MCF 10A (cell line): ENCODE measurements at regions of chr20 and their contacts with region 1.

Region 1: DNA sequence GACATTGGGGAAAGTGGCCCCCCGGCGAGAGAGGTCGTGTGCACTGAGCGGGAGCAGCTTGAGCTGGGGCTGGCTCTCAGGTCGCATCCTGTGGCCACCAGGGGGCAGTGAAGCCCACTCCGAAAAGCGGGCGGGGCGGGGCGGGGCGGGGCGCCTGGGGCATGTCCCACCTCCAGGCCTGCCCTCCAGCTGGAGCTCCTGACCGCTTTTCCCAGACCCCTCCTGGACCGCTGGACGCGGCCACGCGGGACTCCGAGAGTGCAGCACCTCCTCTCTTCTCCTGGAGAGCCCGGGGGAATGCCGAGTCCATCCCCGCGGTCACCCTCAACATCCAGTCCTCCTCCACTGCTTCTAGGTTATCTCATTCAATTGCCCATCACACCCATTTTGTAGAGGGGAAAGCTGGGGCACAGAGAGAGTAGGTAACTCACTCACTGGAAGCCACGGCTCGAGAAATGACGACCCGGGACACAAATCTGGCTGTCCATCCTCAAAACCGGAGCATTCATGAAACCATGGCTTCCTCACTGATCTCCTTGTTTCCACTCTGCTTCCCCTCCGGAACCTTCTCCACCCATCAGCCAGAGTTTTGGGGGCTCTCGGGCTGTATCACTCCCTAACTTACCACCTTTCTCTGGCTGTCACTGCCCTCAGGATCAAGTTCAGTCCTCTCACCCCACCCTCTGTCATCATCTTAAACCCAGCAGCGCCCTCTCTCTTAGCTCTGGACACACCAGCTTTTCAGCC is 24.1 kb downstream of the COX4I2 start:
- DNase-seq: peak; percentile 71
- H3K4me3 Mint-ChIP-seq: peak overlapping the region; percentile 58
- H3K27ac Mint-ChIP-seq: no peak overlapping the region
- H3K4me1 Mint-ChIP-seq: peaks cover 19% of the 10 kb centered on the region
- H3K27me3 Mint-ChIP-seq: no peaks in the 10 kb centered on the region
- CTCF ChIP-seq: peak; percentile 75

Region 2: DNA sequence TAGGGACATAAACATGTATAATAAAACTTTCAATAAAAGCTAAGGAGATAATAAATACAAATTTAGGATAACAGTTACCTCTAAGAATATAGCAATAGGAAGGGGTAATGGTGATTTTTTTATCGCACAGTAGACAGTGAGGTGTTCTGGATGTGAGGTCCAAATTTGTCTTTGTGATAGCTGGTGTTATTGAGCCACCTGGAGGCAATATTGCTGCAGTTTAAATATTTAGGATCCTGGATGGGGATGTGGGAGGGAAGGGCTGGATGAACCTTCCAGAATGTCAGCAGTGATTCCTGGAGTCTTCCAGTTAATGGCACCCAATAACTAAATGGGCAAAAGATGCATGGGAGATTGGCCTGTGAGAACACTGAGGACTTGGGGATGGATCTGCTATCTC is 207.4 kb before region 1 on chr20:
- CTCF ChIA-PET with region 1: no interaction called
- POLR2A ChIA-PET with region 1: no interaction called
- intact Hi-C with region 1: no loop called
- DNase-seq: no peak
- H3K4me3 Mint-ChIP-seq: no peak overlapping the region
- H3K27ac Mint-ChIP-seq: no peak overlapping the region
- H3K4me1 Mint-ChIP-seq: no peaks in the 10 kb centered on the region
- H3K27me3 Mint-ChIP-seq: peaks cover 12% of the 10 kb centered on the region
- CTCF ChIP-seq: no peak

Region 3: GRCh38 chr20:31630187-31630790 is 31.5 kb before region 1 on chr20:
- CTCF ChIA-PET with region 1: interaction called, 73 read pairs
- POLR2A ChIA-PET with region 1: interaction called, 5 read pairs
- intact Hi-C with region 1: no loop called
- DNase-seq: peak; percentile 63
- H3K4me3 Mint-ChIP-seq: no peak overlapping the region
- H3K27ac Mint-ChIP-seq: no peak overlapping the region
- H3K4me1 Mint-ChIP-seq: no peaks in the 10 kb centered on the region
- H3K27me3 Mint-ChIP-seq: no peaks in the 10 kb centered on the region
- CTCF ChIP-seq: no peak

Region 4: DNA sequence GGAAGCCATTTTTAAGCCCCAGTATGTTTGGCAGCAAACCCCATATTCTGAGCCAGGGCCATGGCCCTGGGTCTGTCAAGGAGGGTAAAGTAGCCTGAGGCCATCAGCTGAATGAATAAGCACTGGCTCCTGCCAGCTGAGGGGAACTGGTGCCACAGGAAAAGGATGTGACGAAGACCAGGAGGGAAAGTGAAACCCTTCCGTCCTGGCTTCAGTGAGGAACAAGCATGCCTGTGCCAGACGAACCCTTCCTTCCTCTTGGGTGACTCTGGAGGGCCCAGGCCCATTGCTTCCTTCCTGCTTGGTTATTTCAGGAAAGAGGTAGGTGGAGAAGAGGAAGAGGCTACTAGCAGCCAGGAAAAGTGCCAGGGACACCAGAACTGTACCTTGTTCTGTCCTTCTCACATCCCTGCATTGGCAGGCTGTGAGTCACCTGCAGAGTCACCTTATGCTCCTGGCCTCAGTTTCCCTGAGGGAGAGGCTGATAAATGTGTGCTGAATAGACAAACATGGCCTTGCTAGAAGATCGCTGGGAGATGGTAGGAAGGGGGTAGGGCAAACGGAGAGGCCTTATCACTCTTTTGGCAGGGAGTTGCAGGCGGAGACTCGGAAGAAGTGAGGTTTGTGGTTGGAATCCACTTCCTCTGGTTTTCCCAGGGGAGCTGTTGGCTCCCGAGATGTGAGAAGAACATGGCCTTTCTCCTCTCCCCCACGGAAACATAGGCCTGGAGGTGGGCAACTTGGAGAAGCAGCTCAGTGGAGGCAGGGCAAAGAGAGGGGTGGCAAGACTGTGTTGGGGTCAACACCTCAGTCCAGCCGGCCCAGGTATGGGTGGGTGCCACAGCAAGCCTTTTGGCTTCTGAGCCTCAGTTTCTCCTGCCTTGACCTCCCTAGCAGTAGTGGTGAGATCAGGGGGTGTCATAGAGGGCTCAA is 13.4 kb after region 1 on chr20:
- CTCF ChIA-PET with region 1: interaction called, 174 read pairs
- POLR2A ChIA-PET with region 1: interaction called, 18 read pairs
- intact Hi-C with region 1: no loop called
- DNase-seq: peak; percentile 83
- H3K4me3 Mint-ChIP-seq: peak overlapping the region; percentile 63
- H3K27ac Mint-ChIP-seq: peak overlapping the region; percentile 60
- H3K4me1 Mint-ChIP-seq: peaks cover 51% of the 10 kb centered on the region
- H3K27me3 Mint-ChIP-seq: no peaks in the 10 kb centered on the region
- CTCF ChIP-seq: no peak

Region 5: GRCh38 chr20:31698803-31699718 is 37.3 kb after region 1 on chr20:
- CTCF ChIA-PET with region 1: interaction called, 120 read pairs
- POLR2A ChIA-PET with region 1: interaction called, 54 read pairs
- intact Hi-C with region 1: no loop called
- DNase-seq: peak; percentile 76
- H3K4me3 Mint-ChIP-seq: peak overlapping the region; percentile 52
- H3K27ac Mint-ChIP-seq: peak overlapping the region; percentile 97
- H3K4me1 Mint-ChIP-seq: peaks cover 55% of the 10 kb centered on the region
- H3K27me3 Mint-ChIP-seq: no peaks in the 10 kb centered on the region
- CTCF ChIP-seq: no peak

Region 6: GRCh38 chr20:31712564-31713311 is 50.9 kb after region 1 on chr20:
- CTCF ChIA-PET with region 1: interaction called, 626 read pairs
- POLR2A ChIA-PET with region 1: interaction called, 259 read pairs
- intact Hi-C with region 1: no loop called
- DNase-seq: peak; percentile 92
- H3K4me3 Mint-ChIP-seq: peak overlapping the region; percentile 70
- H3K27ac Mint-ChIP-seq: peak overlapping the region; percentile 96
- H3K4me1 Mint-ChIP-seq: peaks cover 78% of the 10 kb centered on the region
- H3K27me3 Mint-ChIP-seq: no peaks in the 10 kb centered on the region
- CTCF ChIP-seq: no peak